ENCODE measurements at regions of chr1 and their contacts with region 1.

Region 1: DNA sequence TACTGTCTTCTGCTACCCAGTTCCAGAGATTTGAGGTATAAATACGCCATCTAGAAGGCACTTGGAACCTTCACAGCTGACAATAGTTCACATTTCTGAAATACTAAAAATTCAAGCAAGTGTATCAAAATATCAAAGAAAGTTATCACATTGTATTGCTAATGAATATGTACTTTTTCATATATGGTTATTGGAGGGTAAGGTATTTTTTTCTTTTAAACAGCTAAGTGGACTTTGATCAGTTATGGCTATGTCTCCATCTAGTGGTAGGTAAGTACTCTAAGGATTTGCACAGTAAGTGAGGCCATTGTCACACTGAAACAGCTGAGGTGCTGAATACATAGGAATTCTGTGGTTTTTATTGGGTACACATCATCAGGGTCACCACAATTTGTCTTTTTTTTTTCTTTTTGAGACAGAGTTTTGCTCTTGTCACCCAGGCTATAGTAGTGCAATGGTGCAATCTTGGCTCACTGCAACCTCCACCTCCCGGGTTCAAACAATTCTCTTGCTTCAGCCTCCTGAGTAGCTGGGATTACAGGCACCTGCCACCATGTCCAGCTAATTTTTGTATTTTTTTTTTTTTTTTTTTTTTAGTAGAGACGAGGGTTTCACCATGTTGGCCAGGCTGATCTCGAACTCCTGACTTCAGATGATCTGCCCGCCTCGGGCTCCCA is 49.1 kb upstream of the CR2 start:
- DNase-seq: no peak
- ATAC-seq: peak; percentile 86
- H3K4me3 Mint-ChIP-seq: no peak overlapping the region
- H3K27ac Mint-ChIP-seq: no peak overlapping the region
- H3K4me1 Mint-ChIP-seq: peaks cover 16% of the 10 kb centered on the region
- H3K27me3 Mint-ChIP-seq: no peaks in the 10 kb centered on the region

Region 2: DNA sequence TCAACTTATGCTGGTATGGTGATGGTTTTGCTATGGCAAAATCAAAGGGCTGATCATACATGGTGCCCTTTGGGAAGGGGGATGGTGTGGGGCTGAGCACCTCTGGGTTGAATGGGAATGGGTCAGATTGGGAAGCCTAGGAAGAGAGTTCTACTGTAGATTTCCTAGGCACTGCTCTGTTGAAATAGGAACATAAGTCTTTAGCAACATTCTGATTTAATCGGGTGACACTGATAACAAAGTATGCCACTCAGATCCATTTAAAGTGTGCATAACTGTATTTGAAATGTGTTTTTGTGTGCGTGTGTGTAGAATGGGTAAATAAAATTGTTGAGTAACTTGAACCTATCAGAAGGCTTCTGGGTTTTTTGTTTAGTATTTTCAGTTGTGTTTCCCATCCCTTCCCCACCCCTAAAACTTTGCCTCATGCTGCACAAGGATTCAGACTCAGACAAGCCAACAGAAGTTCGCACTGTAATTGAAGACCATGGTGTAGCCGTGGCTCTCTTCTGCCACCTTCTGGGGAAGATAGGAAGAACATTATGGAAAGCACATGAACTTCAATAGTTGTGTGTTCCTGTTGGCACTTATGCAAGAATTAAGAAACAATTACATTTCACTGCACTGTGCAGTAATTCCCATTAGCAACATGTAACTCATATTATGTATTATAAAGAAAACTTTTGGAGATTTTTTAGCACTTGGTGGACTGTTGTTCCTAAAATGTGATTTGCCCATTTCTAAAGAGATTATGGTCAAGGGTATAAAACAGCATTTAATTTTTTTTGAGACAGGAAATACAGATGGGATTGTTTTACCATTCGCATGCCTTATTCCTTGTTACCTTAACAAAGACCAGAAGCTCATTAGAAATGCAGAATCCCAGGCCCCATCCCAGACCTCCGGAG is 327.3 kb before region 1 on chr1:
- CTCF ChIA-PET with region 1: interaction called, 47 read pairs
- DNase-seq: peak; percentile 76
- ATAC-seq: peak; percentile 87
- H3K4me3 Mint-ChIP-seq: no peak overlapping the region
- H3K27ac Mint-ChIP-seq: no peak overlapping the region
- H3K4me1 Mint-ChIP-seq: peaks cover 2% of the 10 kb centered on the region
- H3K27me3 Mint-ChIP-seq: peaks cover 24% of the 10 kb centered on the region

Region 3: GRCh38 chr1:207084701-207085180 is 320.2 kb before region 1 on chr1:
- CTCF ChIA-PET with region 1: interaction called, 47 read pairs
- DNase-seq: peak; percentile 78
- ATAC-seq: peak; percentile 83
- H3K4me3 Mint-ChIP-seq: no peak overlapping the region
- H3K27ac Mint-ChIP-seq: no peak overlapping the region
- H3K4me1 Mint-ChIP-seq: peaks cover 21% of the 10 kb centered on the region
- H3K27me3 Mint-ChIP-seq: peaks cover 35% of the 10 kb centered on the region

Region 4: GRCh38 chr1:207321079-207321789 is 83.8 kb before region 1 on chr1 and contains the start of gene CD55:
- CTCF ChIA-PET with region 1: interaction called, 27 read pairs
- DNase-seq: peak; percentile 100
- ATAC-seq: peak; percentile 93
- H3K4me3 Mint-ChIP-seq: peak within 1 kb of the TSS; percentile 88
- H3K27ac Mint-ChIP-seq: peak within 1 kb of the TSS; percentile 98
- H3K4me1 Mint-ChIP-seq: peaks cover 31% of the 10 kb centered on the region
- H3K27me3 Mint-ChIP-seq: peaks cover 3% of the 10 kb centered on the region
- total RNA-seq, gene CD55: 64.9 to 96.9 TPM

Region 5: DNA sequence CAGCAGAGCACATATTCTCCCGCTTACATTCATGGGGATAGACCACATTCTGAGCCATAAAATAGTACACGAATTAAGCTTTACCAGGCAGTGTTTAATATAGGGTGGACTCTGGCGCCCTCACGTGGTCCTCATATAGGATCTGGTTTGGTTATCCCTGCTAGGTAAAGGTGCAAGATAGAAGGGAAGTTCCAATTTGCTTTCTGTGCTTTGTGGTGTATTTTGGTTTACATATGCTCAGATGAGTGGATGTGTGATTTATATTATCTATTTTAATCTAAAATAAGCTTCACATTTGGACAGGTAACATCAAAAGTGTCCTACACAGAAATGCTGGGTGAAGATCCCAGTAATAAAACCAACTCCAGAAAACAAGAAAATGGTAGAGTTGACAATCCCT is 94.6 kb after region 1 on chr1:
- CTCF ChIA-PET with region 1: interaction called, 24 read pairs
- DNase-seq: peak; percentile 79
- ATAC-seq: peak; percentile 70
- H3K4me3 Mint-ChIP-seq: no peak overlapping the region
- H3K27ac Mint-ChIP-seq: no peak overlapping the region
- H3K4me1 Mint-ChIP-seq: peaks cover 15% of the 10 kb centered on the region
- H3K27me3 Mint-ChIP-seq: peaks cover 62% of the 10 kb centered on the region